Gastrocnemius medialis (tissue), 4 donors: ENCODE measurements at regions of chrX and their contacts with region 1.

Region 1: GRCh38 chrX:134520860-134521390 is 61.0 kb downstream of the HPRT1 start:
- DNase-seq: no peak
- ATAC-seq: peak in 1 of 2 donors; percentile 81
- H3K4me3 ChIP-seq: no peak overlapping the region
- H3K27ac ChIP-seq: no peak overlapping the region
- H3K4me1 ChIP-seq: no peaks in the 10 kb centered on the region
- H3K27me3 ChIP-seq: no peaks in the 10 kb centered on the region
- CTCF ChIP-seq: peak; percentile 23 to 59 (median 37)
- POLR2A ChIP-seq: no peak

Region 2: DNA sequence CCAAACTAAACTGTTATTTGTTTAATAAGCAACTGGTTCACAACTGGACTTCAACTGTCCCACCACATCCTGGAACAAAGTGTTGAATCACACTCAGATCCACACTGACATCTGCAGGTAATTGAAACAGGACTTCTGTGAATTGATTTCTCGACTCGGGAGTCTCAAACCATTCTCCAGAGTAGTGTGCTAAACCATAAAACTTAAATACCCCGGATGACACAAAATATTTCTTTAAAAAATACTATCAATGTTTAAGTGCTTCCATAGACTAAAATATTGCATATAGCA is 232.7 kb after region 1 on chrX:
- in situ Hi-C with region 1: loop called in 2 of 4 experiments (anchors 5 to 10 kb)
- intact Hi-C with region 1: loop called (anchors 1 kb)
- DNase-seq: no peak
- ATAC-seq: no peak
- H3K4me3 ChIP-seq: no peak overlapping the region
- H3K27ac ChIP-seq: no peak overlapping the region
- H3K4me1 ChIP-seq: no peaks in the 10 kb centered on the region
- H3K27me3 ChIP-seq: no peaks in the 10 kb centered on the region
- CTCF ChIP-seq: peak in 3 of 5 experiments; percentile 14 to 43 (median 22)
- POLR2A ChIP-seq: no peak